Activated CD8-positive, alpha-beta memory T cell treated with anti-CD3 and anti-CD28 coated beads, Interleukin-2, amount 10 ng/mL, durations not matched to agents 7 days and 5 days (primary cell): ENCODE measurements at regions of chr21 and their contacts with region 1.

Region 1: DNA sequence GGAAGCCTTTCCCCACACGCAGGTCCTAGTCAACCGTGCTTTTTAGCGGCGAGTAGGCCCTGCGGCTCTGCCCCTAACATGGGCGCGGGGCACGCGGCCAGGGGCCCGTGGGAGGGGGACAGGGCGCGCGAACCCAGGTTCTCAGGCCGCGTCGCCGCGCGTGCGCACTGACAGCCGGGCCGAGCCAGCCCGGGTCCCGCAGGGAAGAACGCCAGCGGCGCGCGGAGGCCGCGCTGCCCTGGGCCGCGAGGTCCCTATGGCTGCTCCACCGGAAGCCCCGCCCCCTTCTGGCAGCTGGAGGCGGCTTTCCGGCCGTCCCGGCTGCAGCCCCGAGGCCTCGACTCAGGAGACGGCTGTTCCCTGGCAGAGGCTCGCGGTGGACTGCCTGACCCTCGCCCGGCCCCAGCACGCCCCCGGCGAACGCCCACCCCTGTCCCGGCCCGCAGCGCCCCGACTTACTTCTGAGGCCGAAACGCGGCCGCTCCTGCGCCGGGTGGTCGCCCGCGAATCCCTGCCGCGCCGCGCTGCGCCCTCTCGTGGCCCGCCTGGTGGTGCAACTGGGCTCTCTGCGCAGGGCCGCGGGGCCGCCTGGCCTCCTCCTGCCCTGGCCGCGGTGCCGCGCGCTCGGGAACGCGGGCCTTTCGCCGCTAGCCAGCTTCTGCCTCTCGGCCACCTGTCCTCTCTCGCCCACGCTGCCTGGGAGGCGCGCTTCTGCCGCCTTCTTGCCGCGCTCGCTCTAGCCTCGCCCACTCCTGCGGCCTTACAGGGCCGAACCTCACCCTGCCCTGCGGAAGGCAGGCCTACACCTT is 16.6 kb upstream of the RIPPLY3 start:
- DNase-seq: peak; percentile 92
- ATAC-seq: peak; percentile 95
- H3K4me3 Mint-ChIP-seq: peak overlapping the region; percentile 78
- H3K27ac Mint-ChIP-seq: peak overlapping the region; percentile 86
- H3K4me1 Mint-ChIP-seq: peaks cover 42% of the 10 kb centered on the region
- H3K27me3 Mint-ChIP-seq: no peaks in the 10 kb centered on the region

Region 2: GRCh38 chr21:36966066-36966820 is 23.7 kb before region 1 on chr21 and contains the start of gene HLCS:
- CTCF ChIA-PET with region 1: interaction called, 17 read pairs
- DNase-seq: peak; percentile 83
- ATAC-seq: peak; percentile 90
- H3K4me3 Mint-ChIP-seq: peak within 1 kb of the TSS; percentile 75
- H3K27ac Mint-ChIP-seq: peak within 1 kb of the TSS; percentile 81
- H3K4me1 Mint-ChIP-seq: peaks cover 21% of the 10 kb centered on the region
- H3K27me3 Mint-ChIP-seq: no peaks in the 10 kb centered on the region
- total RNA-seq, gene HLCS: 14.2 to 16.2 TPM

Region 3: DNA sequence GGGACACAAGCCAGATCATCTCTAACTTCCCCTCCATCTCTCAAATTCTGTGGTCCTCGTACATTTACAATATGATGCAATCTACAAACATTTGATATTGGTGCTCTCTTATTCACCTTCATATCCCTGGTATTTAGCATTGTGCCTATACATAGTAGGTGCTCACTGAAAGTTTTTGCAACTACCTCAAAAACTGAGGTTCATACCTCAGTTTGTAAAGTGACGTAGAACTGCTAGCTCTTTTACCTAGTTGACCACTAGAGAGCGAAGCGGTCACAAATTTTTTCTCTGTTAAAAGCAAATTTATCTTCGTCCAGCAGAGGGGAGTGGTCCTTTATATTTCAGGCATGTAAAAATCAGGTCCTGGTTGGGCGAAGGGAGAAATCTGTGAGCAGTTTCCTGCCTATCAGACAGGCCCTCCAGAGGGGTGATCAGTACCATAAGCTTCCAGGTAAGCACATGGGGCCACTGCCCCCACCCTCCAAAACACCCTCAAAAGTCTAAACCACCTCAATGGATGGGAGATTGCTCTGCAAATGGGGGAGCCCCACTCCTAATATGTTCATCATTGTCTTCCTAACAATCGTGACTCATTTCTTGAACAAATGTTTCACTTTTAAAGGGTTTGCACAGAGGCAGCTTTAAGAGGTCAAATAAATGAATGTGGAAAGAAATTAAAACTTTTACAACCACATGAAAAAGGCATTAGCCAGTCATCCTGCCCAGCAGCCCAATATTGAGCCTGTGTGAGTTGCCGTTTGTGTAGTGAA is 12.8 kb before region 1 on chr21:
- CTCF ChIA-PET with region 1: interaction called, 44 read pairs
- DNase-seq: peak; percentile 66
- ATAC-seq: peak; percentile 77
- H3K4me3 Mint-ChIP-seq: peak overlapping the region; percentile 34
- H3K27ac Mint-ChIP-seq: peak overlapping the region; percentile 70
- H3K4me1 Mint-ChIP-seq: peaks cover 25% of the 10 kb centered on the region
- H3K27me3 Mint-ChIP-seq: peaks cover 9% of the 10 kb centered on the region

Region 4: GRCh38 chr21:37000381-37000780 is 10.5 kb after region 1 on chr21:
- CTCF ChIA-PET with region 1: interaction called, 17 read pairs
- DNase-seq: no peak
- ATAC-seq: no peak
- H3K4me3 Mint-ChIP-seq: no peak overlapping the region
- H3K27ac Mint-ChIP-seq: no peak overlapping the region
- H3K4me1 Mint-ChIP-seq: peaks cover 8% of the 10 kb centered on the region
- H3K27me3 Mint-ChIP-seq: no peaks in the 10 kb centered on the region

Region 5: GRCh38 chr21:37009740-37010341 is 19.9 kb after region 1 on chr21:
- CTCF ChIA-PET with region 1: interaction called, 31 read pairs
- DNase-seq: peak; percentile 86
- ATAC-seq: peak; percentile 93
- H3K4me3 Mint-ChIP-seq: peak overlapping the region; percentile 65
- H3K27ac Mint-ChIP-seq: no peak overlapping the region
- H3K4me1 Mint-ChIP-seq: peaks cover 26% of the 10 kb centered on the region
- H3K27me3 Mint-ChIP-seq: peaks cover 51% of the 10 kb centered on the region

Region 6: GRCh38 chr21:37072274-37072987 is 82.5 kb after region 1 on chr21:
- CTCF ChIA-PET with region 1: interaction called, 12 read pairs
- DNase-seq: peak; percentile 75
- ATAC-seq: peak; percentile 57
- H3K4me3 Mint-ChIP-seq: peak overlapping the region; percentile 73
- H3K27ac Mint-ChIP-seq: peak overlapping the region; percentile 76
- H3K4me1 Mint-ChIP-seq: peaks cover 37% of the 10 kb centered on the region
- H3K27me3 Mint-ChIP-seq: no peaks in the 10 kb centered on the region

Region 7: GRCh38 chr21:37101384-37101783 is 111.5 kb after region 1 on chr21:
- CTCF ChIA-PET with region 1: no interaction called
- DNase-seq: no peak
- ATAC-seq: no peak
- H3K4me3 Mint-ChIP-seq: no peak overlapping the region
- H3K27ac Mint-ChIP-seq: no peak overlapping the region
- H3K4me1 Mint-ChIP-seq: no peaks in the 10 kb centered on the region
- H3K27me3 Mint-ChIP-seq: no peaks in the 10 kb centered on the region